CD8-positive, alpha-beta T cell (primary cell): ENCODE measurements at regions of chr12 and their contacts with region 1.

Region 1: GRCh38 chr12:54993161-54993835 is 8.7 kb upstream of the TESPA1 start:
- DNase-seq: peak in 7 of 9 experiments; percentile 32 to 89 (median 59)
- ATAC-seq: peak; percentile 72
- H3K4me3 ChIP-seq: no peak overlapping the region
- H3K4me3 Mint-ChIP-seq: no peak overlapping the region
- H3K27ac ChIP-seq: no peak overlapping the region
- H3K27ac Mint-ChIP-seq: no peak overlapping the region
- H3K4me1 ChIP-seq: peaks cover 48% of the 10 kb centered on the region
- H3K4me1 Mint-ChIP-seq: peaks cover 49% of the 10 kb centered on the region
- H3K27me3 ChIP-seq: no peaks in the 10 kb centered on the region
- H3K27me3 Mint-ChIP-seq: no peaks in the 10 kb centered on the region
- CTCF ChIP-seq: peak; percentile 93

Region 2: GRCh38 chr12:54701940-54702592 is 291.2 kb before region 1 on chr12:
- CTCF ChIA-PET with region 1: interaction called, 18 read pairs
- POLR2A ChIA-PET with region 1: no interaction called
- intact Hi-C with region 1: loop called in 1 of 2 experiments (anchors 1 kb)
- DNase-seq: peak in 3 of 9 experiments; percentile 33 to 77 (median 69)
- ATAC-seq: peak; percentile 54
- H3K4me3 ChIP-seq: no peak overlapping the region
- H3K4me3 Mint-ChIP-seq: no peak overlapping the region
- H3K27ac ChIP-seq: no peak overlapping the region
- H3K27ac Mint-ChIP-seq: no peak overlapping the region
- H3K4me1 ChIP-seq: no peaks in the 10 kb centered on the region
- H3K4me1 Mint-ChIP-seq: no peaks in the 10 kb centered on the region
- H3K27me3 ChIP-seq: no peaks in the 10 kb centered on the region
- H3K27me3 Mint-ChIP-seq: peaks cover 5% of the 10 kb centered on the region
- CTCF ChIP-seq: peak; percentile 84

Region 3: DNA sequence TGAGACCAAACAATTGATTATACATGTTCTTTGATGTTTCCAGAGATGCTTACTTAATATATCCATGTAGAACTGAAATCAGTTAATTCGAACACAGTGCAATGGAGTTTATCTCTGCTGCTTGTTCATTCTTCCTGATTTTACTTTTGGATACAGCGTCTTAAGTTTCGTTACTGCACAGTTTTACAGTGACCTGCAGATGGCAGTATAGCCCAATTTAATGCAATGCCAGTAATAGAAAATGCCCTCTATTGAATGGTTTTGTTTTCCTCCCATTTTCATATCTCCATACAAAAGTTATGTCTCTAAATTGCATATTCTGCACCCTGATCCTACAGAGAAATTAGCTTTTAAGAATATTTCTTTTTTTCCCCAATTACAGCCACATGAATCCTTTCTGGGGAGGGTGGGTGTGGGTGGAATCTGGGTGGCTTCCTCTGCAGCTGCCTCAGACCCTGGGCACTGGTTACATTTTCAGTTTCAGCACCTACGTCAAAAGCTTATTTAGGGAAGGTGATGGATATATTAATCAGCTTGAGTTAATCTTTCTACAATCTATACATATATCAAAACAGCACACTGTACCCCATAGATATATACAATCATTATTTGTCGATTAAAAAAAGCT is 244.0 kb before region 1 on chr12:
- CTCF ChIA-PET with region 1: interaction called, 56 read pairs
- POLR2A ChIA-PET with region 1: interaction called, 3 read pairs
- intact Hi-C with region 1: loop called in 1 of 2 experiments (anchors 1 kb)
- DNase-seq: peak in 6 of 9 experiments; percentile 23 to 82 (median 42)
- ATAC-seq: peak; percentile 67
- H3K4me3 ChIP-seq: no peak overlapping the region
- H3K4me3 Mint-ChIP-seq: peak overlapping the region; percentile 61
- H3K27ac ChIP-seq: no peak overlapping the region
- H3K27ac Mint-ChIP-seq: no peak overlapping the region
- H3K4me1 ChIP-seq: peaks cover 20% of the 10 kb centered on the region
- H3K4me1 Mint-ChIP-seq: peaks cover 34% of the 10 kb centered on the region
- H3K27me3 ChIP-seq: no peaks in the 10 kb centered on the region
- H3K27me3 Mint-ChIP-seq: no peaks in the 10 kb centered on the region
- CTCF ChIP-seq: peak; percentile 83

Region 4: DNA sequence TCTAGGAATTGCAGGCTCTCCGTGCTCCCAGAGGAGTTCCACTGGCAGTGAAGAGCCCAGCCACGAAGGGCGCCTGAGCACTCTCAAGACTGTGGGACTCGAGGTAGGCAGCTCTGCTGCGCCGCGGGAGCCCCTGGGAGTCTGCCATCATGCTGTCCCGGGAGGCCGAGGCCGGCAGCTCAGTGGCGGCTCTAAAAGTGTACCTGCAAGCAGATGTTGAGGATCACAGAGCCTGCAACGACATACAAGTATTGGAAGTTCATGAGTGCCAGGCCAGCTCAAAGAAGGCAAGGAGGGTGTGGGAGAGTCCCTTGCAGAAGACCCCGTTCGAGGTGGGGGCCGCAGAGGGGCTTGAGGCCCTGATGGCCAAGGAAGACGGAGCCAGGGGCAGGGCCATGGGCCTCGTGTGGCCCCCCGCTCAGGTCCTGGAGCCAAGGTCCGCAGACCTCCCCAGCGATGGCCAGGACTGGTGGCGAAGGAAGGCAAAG is 76.3 kb before region 1 on chr12:
- CTCF ChIA-PET with region 1: no interaction called
- POLR2A ChIA-PET with region 1: no interaction called
- intact Hi-C with region 1: no loop called
- DNase-seq: no peak
- ATAC-seq: no peak
- H3K4me3 ChIP-seq: no peak overlapping the region
- H3K4me3 Mint-ChIP-seq: no peak overlapping the region
- H3K27ac ChIP-seq: no peak overlapping the region
- H3K27ac Mint-ChIP-seq: no peak overlapping the region
- H3K4me1 ChIP-seq: no peaks in the 10 kb centered on the region
- H3K4me1 Mint-ChIP-seq: no peaks in the 10 kb centered on the region
- H3K27me3 ChIP-seq: no peaks in the 10 kb centered on the region
- H3K27me3 Mint-ChIP-seq: no peaks in the 10 kb centered on the region
- CTCF ChIP-seq: no peak

Region 5: DNA sequence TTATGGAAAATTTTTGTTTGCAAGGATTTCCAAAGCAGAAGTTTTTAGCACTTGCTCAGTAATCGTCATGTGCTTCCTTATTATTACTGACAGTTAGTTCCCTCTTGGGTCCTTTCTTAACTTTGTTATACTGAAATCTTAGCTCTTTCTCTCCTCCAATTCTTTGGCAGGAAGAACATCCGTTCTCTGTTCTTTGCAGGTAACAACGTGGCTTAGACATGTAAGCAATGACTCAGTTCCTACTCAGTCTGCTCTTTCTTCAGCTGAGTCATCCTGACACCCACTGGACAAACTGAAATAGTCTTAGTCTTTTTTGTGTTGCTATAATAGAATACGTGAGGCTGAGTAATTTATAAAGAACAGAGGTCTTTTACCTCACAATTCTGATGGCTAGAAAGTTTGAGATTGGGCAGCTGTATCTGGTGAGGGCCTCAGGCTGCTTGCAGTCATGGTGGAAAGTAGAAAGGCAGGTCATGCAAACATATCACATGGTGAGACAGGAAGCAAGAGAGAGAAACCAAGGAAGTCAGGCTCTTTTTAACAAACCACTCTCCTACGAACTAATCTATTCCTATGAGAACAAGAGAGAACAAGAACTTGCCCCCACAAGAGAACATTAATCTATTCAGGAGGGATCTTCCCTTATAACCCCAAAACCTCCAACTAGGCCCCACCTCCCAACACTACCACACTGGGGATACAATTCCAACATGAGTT is 57.9 kb before region 1 on chr12:
- CTCF ChIA-PET with region 1: interaction called, 4 read pairs
- POLR2A ChIA-PET with region 1: no interaction called
- intact Hi-C with region 1: loop called in 1 of 2 experiments (anchors 2 kb)
- DNase-seq: peak in 7 of 9 experiments; percentile 12 to 69 (median 36)
- ATAC-seq: peak; percentile 91
- H3K4me3 ChIP-seq: no peak overlapping the region
- H3K4me3 Mint-ChIP-seq: peak overlapping the region; percentile 55
- H3K27ac ChIP-seq: peak overlapping the region in 1 of 2 experiments; percentile 66
- H3K27ac Mint-ChIP-seq: peak overlapping the region; percentile 93
- H3K4me1 ChIP-seq: peaks cover 37% of the 10 kb centered on the region
- H3K4me1 Mint-ChIP-seq: peaks cover 47% of the 10 kb centered on the region
- H3K27me3 ChIP-seq: no peaks in the 10 kb centered on the region
- H3K27me3 Mint-ChIP-seq: no peaks in the 10 kb centered on the region
- CTCF ChIP-seq: no peak

Region 6: GRCh38 chr12:54977155-54977554 is 16.1 kb before region 1 on chr12:
- CTCF ChIA-PET with region 1: interaction called, 51 read pairs
- POLR2A ChIA-PET with region 1: no interaction called
- intact Hi-C with region 1: no loop called
- DNase-seq: no peak
- ATAC-seq: no peak
- H3K4me3 ChIP-seq: no peak overlapping the region
- H3K4me3 Mint-ChIP-seq: peak overlapping the region; percentile 77
- H3K27ac ChIP-seq: no peak overlapping the region
- H3K27ac Mint-ChIP-seq: peak overlapping the region; percentile 86
- H3K4me1 ChIP-seq: peaks cover 92% of the 10 kb centered on the region
- H3K4me1 Mint-ChIP-seq: peaks cover 98% of the 10 kb centered on the region
- H3K27me3 ChIP-seq: no peaks in the 10 kb centered on the region
- H3K27me3 Mint-ChIP-seq: no peaks in the 10 kb centered on the region
- CTCF ChIP-seq: no peak

Region 7: GRCh38 chr12:55043542-55043941 is 50.2 kb after region 1 on chr12:
- CTCF ChIA-PET with region 1: interaction called, 10 read pairs
- POLR2A ChIA-PET with region 1: no interaction called
- intact Hi-C with region 1: no loop called
- DNase-seq: peak in 1 of 9 experiments; percentile 16
- ATAC-seq: no peak
- H3K4me3 ChIP-seq: no peak overlapping the region
- H3K4me3 Mint-ChIP-seq: no peak overlapping the region
- H3K27ac ChIP-seq: no peak overlapping the region
- H3K27ac Mint-ChIP-seq: no peak overlapping the region
- H3K4me1 ChIP-seq: peaks cover 2% of the 10 kb centered on the region
- H3K4me1 Mint-ChIP-seq: peaks cover 11% of the 10 kb centered on the region
- H3K27me3 ChIP-seq: no peaks in the 10 kb centered on the region
- H3K27me3 Mint-ChIP-seq: peaks cover 1% of the 10 kb centered on the region
- CTCF ChIP-seq: no peak

Region 8: DNA sequence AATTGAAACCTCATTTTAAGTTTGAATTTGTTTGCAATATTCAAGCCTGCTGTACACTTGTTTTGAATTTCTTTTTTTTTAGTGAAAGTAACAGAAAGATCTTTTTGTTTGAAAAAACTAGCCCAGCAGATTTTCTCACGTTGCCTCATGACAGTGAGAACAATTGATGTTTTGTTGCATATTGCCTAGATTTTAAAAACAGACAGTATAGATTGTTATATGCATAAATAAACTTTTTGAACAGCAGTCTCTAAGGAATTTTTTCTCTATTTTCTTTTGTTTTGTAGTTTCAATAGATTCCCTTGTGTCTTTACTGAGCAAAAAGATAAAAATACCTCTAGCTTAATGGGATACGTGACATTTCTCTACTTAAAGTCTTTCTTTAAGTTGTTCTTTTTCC is 287.7 kb after region 1 on chr12:
- CTCF ChIA-PET with region 1: no interaction called
- POLR2A ChIA-PET with region 1: no interaction called
- intact Hi-C with region 1: no loop called
- DNase-seq: no peak
- ATAC-seq: no peak
- H3K4me3 ChIP-seq: no peak overlapping the region
- H3K4me3 Mint-ChIP-seq: no peak overlapping the region
- H3K27ac ChIP-seq: no peak overlapping the region
- H3K27ac Mint-ChIP-seq: no peak overlapping the region
- H3K4me1 ChIP-seq: no peaks in the 10 kb centered on the region
- H3K4me1 Mint-ChIP-seq: no peaks in the 10 kb centered on the region
- H3K27me3 ChIP-seq: no peaks in the 10 kb centered on the region
- H3K27me3 Mint-ChIP-seq: peaks cover 18% of the 10 kb centered on the region
- CTCF ChIP-seq: no peak

Region 9: DNA sequence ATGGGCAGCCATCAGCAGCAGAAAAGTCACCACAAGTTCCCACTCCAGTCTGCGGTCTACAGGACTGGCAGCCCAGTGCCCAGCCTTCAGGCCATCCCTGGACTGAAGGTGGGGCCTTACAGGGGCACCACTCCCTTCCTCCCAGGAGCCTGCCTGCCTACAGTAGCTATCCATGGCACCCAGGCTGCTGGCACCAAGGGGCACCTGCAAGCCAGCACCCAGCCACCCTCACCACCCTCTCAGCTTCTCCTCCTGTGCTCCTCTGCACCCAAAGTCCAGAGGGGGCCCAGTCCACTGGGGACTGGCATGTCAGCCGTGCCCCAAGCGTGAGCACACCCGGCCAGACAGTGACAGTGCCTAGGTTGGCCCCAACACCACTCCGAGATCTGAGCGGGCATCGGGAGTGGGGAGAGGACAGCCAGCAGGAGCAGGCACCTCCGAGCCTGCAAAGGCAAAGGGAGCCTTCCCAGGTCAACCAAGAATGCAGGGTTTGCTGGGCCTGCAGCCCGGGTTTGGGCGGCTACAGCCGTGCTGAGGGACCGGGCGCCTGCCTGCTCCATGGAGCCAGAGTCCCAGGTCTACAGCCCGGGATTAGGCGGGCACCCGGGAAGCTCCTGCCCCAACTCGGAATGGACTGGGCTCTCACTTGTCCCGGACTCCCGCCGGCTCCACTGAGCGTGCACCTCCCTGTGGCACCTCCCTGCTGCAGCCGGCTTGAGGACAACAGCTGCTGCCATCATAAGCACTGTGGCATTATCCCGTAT is 398.9 kb after region 1 on chr12:
- CTCF ChIA-PET with region 1: no interaction called
- POLR2A ChIA-PET with region 1: no interaction called
- intact Hi-C with region 1: no loop called
- DNase-seq: no peak
- ATAC-seq: no peak
- H3K4me3 ChIP-seq: no peak overlapping the region
- H3K4me3 Mint-ChIP-seq: no peak overlapping the region
- H3K27ac ChIP-seq: no peak overlapping the region
- H3K27ac Mint-ChIP-seq: no peak overlapping the region
- H3K4me1 ChIP-seq: no peaks in the 10 kb centered on the region
- H3K4me1 Mint-ChIP-seq: no peaks in the 10 kb centered on the region
- H3K27me3 ChIP-seq: peaks cover 0 to 2% of the 10 kb centered on the region in 2 experiments
- H3K27me3 Mint-ChIP-seq: peaks cover 17% of the 10 kb centered on the region
- CTCF ChIP-seq: no peak